ENCODE measurements at regions of chr12 and their contacts with region 1.

Region 1: GRCh38 chr12:81644503-81644902 is 114.6 kb downstream of the PPFIA2 start:
- DNase-seq: no peak
- ATAC-seq: peak; percentile 75

Region 2: GRCh38 chr12:82326905-82327503 is 682.5 kb after region 1 on chr12:
- intact Hi-C with region 1: loop called (anchors 10 kb)
- DNase-seq: no peak
- ATAC-seq: no peak

Measured in sciatic nerve (tissue), 2 donors.